H1 (cell line): ENCODE measurements at regions of chr15 and their contacts with region 1.

Region 1: DNA sequence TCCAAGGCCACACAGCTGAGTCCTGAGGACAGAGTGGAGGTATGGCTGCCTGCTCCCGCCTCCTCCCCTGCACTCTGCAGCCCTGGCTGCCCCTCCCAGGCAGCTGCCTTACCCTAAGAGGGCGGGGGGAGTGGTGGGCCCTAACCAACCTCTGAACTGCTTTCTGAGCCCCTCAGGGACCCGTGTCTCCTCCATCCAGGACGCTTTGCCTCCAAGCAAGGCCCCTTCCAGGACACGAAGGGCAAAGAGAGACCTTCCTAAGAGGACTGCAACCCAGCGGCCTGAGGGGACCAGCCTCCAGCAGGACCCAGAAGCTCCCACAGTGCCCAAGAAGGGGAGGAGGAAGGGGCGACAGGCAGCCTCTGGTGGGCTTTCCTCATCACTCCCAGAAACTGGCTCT is 7.6 kb downstream of the NEIL1 start:
- DNase-seq: no peak
- H3K4me3 ChIP-seq: no peak overlapping the region
- H3K27ac ChIP-seq: no peak overlapping the region
- H3K4me1 ChIP-seq: no peaks in the 10 kb centered on the region
- H3K27me3 ChIP-seq: peaks cover 0 to 7% (median 0%) of the 10 kb centered on the region in 4 experiments; a peak in 2 of 7 replicates
- CTCF ChIP-seq: no peak
- EP300 ChIP-seq: no peak
- POLR2A ChIP-seq: 0 out of 3 replicates have a peak, but pooled peaks of 1 of the 2 experiments have one; percentile 16
- RAD21 ChIP-seq: no peak

Region 2: GRCh38 chr15:75335705-75336355 is 18.6 kb before region 1 on chr15 and contains the start of gene COMMD4:
- CTCF ChIA-PET with region 1: interaction called, 3 read pairs
- POLR2A ChIA-PET with region 1: interaction called, 12 read pairs
- DNase-seq: peak; percentile 75 to 95
- H3K4me3 ChIP-seq: peak within 1 kb of the TSS; percentile 50 to 91 (median 86)
- H3K27ac ChIP-seq: peak within 1 kb of the TSS; percentile 75; the same call in 1 of the 2 replicates
- H3K4me1 ChIP-seq: peaks cover 0 to 7% (median 2%) of the 10 kb centered on the region in 4 experiments; a peak in 5 of 7 replicates
- H3K27me3 ChIP-seq: no peaks in the 10 kb centered on the region; a peak in 1 of 7 replicates
- CTCF ChIP-seq: no peak
- EP300 ChIP-seq: peak in 1 of 2 experiments; percentile 79; a peak in 1 of 3 replicates
- POLR2A ChIP-seq: peak; percentile 28 to 80
- RAD21 ChIP-seq: no peak
- total RNA-seq, gene COMMD4: 131 and 132 TPM in 2 replicates

Region 3: GRCh38 chr15:75367913-75368688 is 13.6 kb after region 1 on chr15 and contains the start of gene MAN2C1:
- CTCF ChIA-PET with region 1: interaction called, 11 read pairs
- POLR2A ChIA-PET with region 1: interaction called, 69 read pairs
- DNase-seq: peak; percentile 94 to 96
- H3K4me3 ChIP-seq: peak within 1 kb of the TSS; percentile 59 to 85 (median 72)
- H3K27ac ChIP-seq: peak within 1 kb of the TSS; percentile 74
- H3K4me1 ChIP-seq: peaks cover 0 to 4% (median 1%) of the 10 kb centered on the region in 4 experiments; a peak in 4 of 7 replicates
- H3K27me3 ChIP-seq: no peaks in the 10 kb centered on the region
- CTCF ChIP-seq: peak; percentile 91 to 96 (median 93)
- EP300 ChIP-seq: peak; percentile 9 to 76; a peak in 2 of 3 replicates
- POLR2A ChIP-seq: peak; percentile 95 to 96
- RAD21 ChIP-seq: peak; percentile 52 to 65
- total RNA-seq, gene MAN2C1: 79.1 and 88.9 TPM in 2 replicates

Region 4: DNA sequence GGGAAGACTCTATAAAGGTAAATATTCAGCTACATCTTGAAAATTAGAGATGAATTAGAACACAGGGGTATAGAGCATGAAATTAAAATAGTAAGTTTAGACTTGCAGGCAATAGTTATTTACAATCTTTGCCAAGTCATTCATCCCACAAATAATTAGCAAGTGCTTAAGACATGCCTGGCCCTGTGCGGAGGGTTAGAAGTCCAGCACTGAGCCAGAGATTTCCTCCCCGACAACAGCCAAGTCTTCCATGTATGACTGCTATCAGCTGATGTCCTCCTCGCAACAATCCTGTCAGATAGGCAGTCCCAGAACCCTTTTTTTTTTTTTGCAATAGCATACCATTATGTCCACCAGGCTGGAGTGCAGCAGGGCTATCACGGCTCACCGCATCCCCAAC is 82.4 kb after region 1 on chr15:
- CTCF ChIA-PET with region 1: no interaction called
- POLR2A ChIA-PET with region 1: no interaction called
- DNase-seq: no peak
- H3K4me3 ChIP-seq: no peak overlapping the region
- H3K27ac ChIP-seq: no peak overlapping the region
- H3K4me1 ChIP-seq: no peaks in the 10 kb centered on the region
- H3K27me3 ChIP-seq: no peaks in the 10 kb centered on the region
- CTCF ChIP-seq: no peak
- EP300 ChIP-seq: no peak
- POLR2A ChIP-seq: no peak
- RAD21 ChIP-seq: no peak